Posterior vena cava (tissue), 2 donors: ENCODE measurements at regions of chr4 and their contacts with region 1.

Region 1: GRCh38 chr4:167475951-167476350 is 241.7 kb upstream of the SPOCK3 start:
- DNase-seq: no peak

Region 2: GRCh38 chr4:168694648-168695047 is 1218.7 kb after region 1 on chr4:
- intact Hi-C with region 1: loop called in 1 of 2 experiments (anchors 10 kb)
- DNase-seq: no peak